ENCODE measurements at regions of chr22 and their contacts with region 1.

Region 1: GRCh38 chr22:40479126-40479800 is 108.9 kb downstream of the SGSM3 start:
- DNase-seq: no peak
- H3K4me3 ChIP-seq: no peak overlapping the region
- H3K4me3 Mint-ChIP-seq: no peak overlapping the region
- H3K27ac ChIP-seq: no peak overlapping the region
- H3K27ac Mint-ChIP-seq: no peak overlapping the region
- H3K4me1 ChIP-seq: peaks cover 28% of the 10 kb centered on the region
- H3K4me1 Mint-ChIP-seq: peaks cover 14 to 39% (median 24%) of the 10 kb centered on the region in 4 donors
- H3K27me3 ChIP-seq: no peaks in the 10 kb centered on the region
- H3K27me3 Mint-ChIP-seq: no peaks in the 10 kb centered on the region

Region 2: GRCh38 chr22:40441761-40442385 is 37.4 kb before region 1 on chr22:
- CTCF ChIA-PET with region 1: interaction called, 338 read pairs
- POLR2A ChIA-PET with region 1: interaction called, 4 read pairs
- intact Hi-C with region 1: loop called (anchors 2 kb)
- DNase-seq: no peak
- H3K4me3 ChIP-seq: no peak overlapping the region
- H3K4me3 Mint-ChIP-seq: no peak overlapping the region
- H3K27ac ChIP-seq: no peak overlapping the region
- H3K27ac Mint-ChIP-seq: peak overlapping the region in 6 of 7 donors; percentile 2 to 80 (median 29)
- H3K4me1 ChIP-seq: peaks cover 37% of the 10 kb centered on the region
- H3K4me1 Mint-ChIP-seq: peaks cover 51 to 83% (median 67%) of the 10 kb centered on the region in 4 donors
- H3K27me3 ChIP-seq: no peaks in the 10 kb centered on the region
- H3K27me3 Mint-ChIP-seq: no peaks in the 10 kb centered on the region

Region 3: DNA sequence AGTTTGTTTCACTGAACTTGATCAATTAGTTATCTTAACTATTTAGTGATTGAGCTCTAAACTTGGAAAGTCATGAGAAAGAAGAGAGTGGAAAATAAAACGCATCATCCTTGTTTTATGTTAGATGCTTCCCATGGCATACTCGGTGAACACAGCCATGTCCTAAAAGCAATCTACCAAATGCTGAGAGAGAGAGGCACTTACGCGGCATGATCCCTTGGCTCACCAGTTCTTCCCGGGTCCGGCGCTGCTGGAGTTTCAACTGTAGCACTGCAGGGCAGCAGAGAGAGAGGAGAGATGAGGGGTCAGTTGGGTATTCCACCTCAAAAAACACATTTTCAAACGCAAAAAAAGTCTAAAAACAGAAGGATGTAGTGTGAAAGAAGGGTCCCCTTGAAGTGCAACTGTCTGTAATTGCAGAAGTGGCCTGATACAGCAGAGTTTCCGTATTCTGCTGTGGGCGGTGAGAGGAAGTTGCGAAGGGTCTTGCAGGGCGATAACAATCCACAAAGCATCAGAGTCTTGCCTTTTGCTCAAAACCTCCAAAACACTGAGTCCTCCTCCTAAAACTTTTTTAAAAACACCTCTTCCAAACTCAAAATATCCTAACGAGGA is 16.1 kb before region 1 on chr22:
- CTCF ChIA-PET with region 1: interaction called, 5 read pairs
- POLR2A ChIA-PET with region 1: interaction called, 15 read pairs
- intact Hi-C with region 1: no loop called
- DNase-seq: peak; percentile 36 to 58 (median 47)
- H3K4me3 ChIP-seq: peak overlapping the region; percentile 59 to 75
- H3K4me3 Mint-ChIP-seq: peak overlapping the region; percentile 78 to 99 (median 98)
- H3K27ac ChIP-seq: peak overlapping the region; percentile 64
- H3K27ac Mint-ChIP-seq: peak overlapping the region; percentile 89 to 95 (median 93)
- H3K4me1 ChIP-seq: peaks cover 57% of the 10 kb centered on the region
- H3K4me1 Mint-ChIP-seq: peaks cover 48 to 70% (median 61%) of the 10 kb centered on the region in 4 donors
- H3K27me3 ChIP-seq: no peaks in the 10 kb centered on the region
- H3K27me3 Mint-ChIP-seq: no peaks in the 10 kb centered on the region

Measured in CD4-positive, alpha-beta memory T cell (primary cell).